GM10248 (cell line): ENCODE measurements at regions of chr14 and their contacts with region 1.

Region 1: GRCh38 chr14:76181546-76181945 is 29.8 kb downstream of the GPATCH2L start:
- DNase-seq: no peak
- CTCF ChIP-seq: no peak

Region 2: GRCh38 chr14:76117789-76118484 is 63.6 kb before region 1 on chr14:
- CTCF ChIA-PET with region 1: no interaction called
- POLR2A ChIA-PET with region 1: no interaction called
- DNase-seq: no peak
- CTCF ChIP-seq: no peak

Region 3: DNA sequence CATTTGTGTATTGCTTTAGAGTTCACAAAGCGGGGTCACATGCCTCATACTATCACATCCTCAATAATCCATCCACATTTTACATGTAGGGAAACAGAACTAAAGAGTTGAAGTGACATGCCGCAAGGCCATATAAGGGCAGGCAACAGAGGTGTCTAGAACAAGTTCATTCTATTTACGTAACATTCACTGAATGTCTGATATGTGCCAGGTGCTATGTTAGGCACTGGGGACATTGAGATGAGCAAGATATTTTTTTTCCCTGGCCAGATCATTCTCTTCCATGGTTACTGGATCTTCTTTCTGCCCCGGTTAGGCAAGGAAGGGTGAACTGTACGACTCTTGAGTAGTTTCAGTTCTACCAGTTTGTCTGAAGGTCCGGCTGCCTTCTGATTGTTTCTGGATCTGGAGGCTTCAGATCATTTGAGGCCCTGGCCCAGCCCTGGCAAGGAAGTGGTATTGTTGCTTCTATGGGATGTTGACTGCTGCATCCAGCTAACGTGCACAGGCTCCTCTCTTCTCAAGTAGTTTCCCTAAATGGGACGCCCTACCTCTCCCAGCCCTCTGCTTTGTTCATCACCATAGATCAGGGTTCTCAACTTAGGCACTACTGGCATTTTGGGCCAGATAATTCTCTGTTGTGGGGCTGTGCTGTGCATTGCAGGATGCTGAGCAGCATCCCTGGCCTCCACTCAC is 17.7 kb before region 1 on chr14:
- CTCF ChIA-PET with region 1: interaction called, 12 read pairs
- POLR2A ChIA-PET with region 1: interaction called, 3 read pairs
- DNase-seq: no peak
- CTCF ChIP-seq: no peak